CD8-positive, alpha-beta T cell (primary cell): ENCODE measurements at regions of chr7 and their contacts with region 1.

Region 1: DNA sequence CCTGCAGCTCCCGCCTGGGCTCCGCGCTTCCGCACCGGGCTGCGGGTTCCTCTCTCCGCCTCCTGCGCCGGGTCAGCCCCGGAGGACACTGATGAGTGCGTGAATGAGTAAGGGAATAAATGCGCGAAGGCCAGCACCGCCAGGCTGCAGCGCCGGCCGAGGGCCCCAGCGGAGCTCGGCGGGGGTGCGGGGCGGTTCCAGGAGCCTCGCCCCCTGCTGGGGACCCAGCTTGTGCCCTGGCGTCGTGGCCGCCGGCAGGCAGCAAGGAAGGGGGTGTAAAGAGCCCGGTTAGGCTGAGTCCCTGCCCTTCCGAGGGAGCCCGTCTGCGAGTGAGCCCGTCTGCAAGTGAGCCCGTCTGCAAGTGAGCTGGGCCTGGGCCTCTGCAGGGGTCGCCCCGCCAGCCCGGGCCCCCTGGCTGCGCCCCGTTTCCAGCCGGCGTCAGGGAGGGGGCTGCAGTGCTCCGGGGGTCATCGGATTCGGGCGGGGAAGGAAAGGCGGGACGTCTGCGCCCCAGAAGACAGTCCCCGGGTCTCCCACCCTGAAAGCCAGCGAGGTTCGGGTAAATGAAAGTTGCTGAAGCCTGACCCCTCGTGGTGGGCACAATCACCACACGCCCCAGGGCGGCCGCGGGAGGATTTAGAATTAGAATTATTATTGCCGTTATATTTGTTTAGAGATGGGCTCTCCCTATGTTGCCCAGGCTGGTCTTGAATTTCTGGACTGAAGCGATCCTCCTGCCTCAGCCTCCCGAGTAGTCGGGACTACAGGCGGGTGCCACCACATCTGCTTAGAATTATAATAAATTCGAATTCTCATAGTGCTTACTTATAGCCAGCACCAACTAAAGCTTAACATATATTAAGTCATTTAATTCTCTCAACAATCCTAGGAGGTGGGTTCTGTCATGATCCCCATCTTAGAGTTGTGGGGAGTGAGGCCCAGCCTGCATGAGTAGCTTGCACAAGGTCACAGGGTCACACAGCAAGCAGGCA is 8.6 kb upstream of the CRYGN start:
- DNase-seq: peak; percentile 63 to 90 (median 81)
- ATAC-seq: peak; percentile 90
- H3K4me3 ChIP-seq: peak overlapping the region; percentile 53 to 74
- H3K4me3 Mint-ChIP-seq: peak overlapping the region; percentile 86
- H3K27ac ChIP-seq: peak overlapping the region; percentile 16 to 40
- H3K27ac Mint-ChIP-seq: peak overlapping the region; percentile 85
- H3K4me1 ChIP-seq: peaks cover 3% of the 10 kb centered on the region
- H3K4me1 Mint-ChIP-seq: peaks cover 8% of the 10 kb centered on the region
- H3K27me3 ChIP-seq: no peaks in the 10 kb centered on the region
- H3K27me3 Mint-ChIP-seq: peaks cover 7% of the 10 kb centered on the region
- CTCF ChIP-seq: peak; percentile 65

Region 2: GRCh38 chr7:151304856-151305255 is 143.7 kb before region 1 on chr7:
- CTCF ChIA-PET with region 1: interaction called, 17 read pairs
- POLR2A ChIA-PET with region 1: no interaction called
- intact Hi-C with region 1: loop called in 1 of 2 experiments (anchors 1 kb)
- DNase-seq: no peak
- ATAC-seq: no peak
- H3K4me3 ChIP-seq: no peak overlapping the region
- H3K4me3 Mint-ChIP-seq: no peak overlapping the region
- H3K27ac ChIP-seq: no peak overlapping the region
- H3K27ac Mint-ChIP-seq: no peak overlapping the region
- H3K4me1 ChIP-seq: peaks cover 8% of the 10 kb centered on the region
- H3K4me1 Mint-ChIP-seq: peaks cover 6% of the 10 kb centered on the region
- H3K27me3 ChIP-seq: peaks cover 0 to 14% of the 10 kb centered on the region in 2 experiments
- H3K27me3 Mint-ChIP-seq: peaks cover 38% of the 10 kb centered on the region
- CTCF ChIP-seq: no peak

Region 3: GRCh38 chr7:151351027-151351426 is 97.5 kb before region 1 on chr7:
- CTCF ChIA-PET with region 1: interaction called, 89 read pairs
- POLR2A ChIA-PET with region 1: interaction called, 18 read pairs
- intact Hi-C with region 1: loop called (anchors 1 kb)
- DNase-seq: peak in 4 of 9 experiments; percentile 29 to 59 (median 46)
- ATAC-seq: no peak
- H3K4me3 ChIP-seq: no peak overlapping the region
- H3K4me3 Mint-ChIP-seq: peak overlapping the region; percentile 22
- H3K27ac ChIP-seq: peak overlapping the region; percentile 45 to 98
- H3K27ac Mint-ChIP-seq: peak overlapping the region; percentile 89
- H3K4me1 ChIP-seq: peaks cover 39% of the 10 kb centered on the region
- H3K4me1 Mint-ChIP-seq: peaks cover 57% of the 10 kb centered on the region
- H3K27me3 ChIP-seq: no peaks in the 10 kb centered on the region
- H3K27me3 Mint-ChIP-seq: no peaks in the 10 kb centered on the region
- CTCF ChIP-seq: no peak

Region 4: DNA sequence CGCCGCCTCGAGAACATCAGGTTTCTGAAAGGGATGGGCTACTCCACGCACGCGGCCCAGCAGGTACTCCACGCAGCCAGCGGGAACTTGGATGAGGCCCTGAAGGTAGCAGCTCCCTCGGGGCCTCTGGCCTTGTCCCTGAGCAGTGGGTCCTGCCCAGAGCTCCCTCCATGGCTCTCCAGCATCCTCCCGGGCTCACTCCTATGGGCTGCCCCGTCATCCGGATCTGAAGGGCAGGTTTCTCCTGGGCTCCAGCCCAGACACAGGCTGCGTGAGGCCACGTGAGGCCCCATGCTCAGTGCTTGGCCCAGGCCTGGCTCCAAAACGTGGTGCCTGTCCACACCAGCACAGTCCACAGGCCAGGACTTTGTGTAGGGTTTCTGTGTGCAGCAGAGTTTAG is 74.4 kb before region 1 on chr7:
- CTCF ChIA-PET with region 1: interaction called, 248 read pairs
- POLR2A ChIA-PET with region 1: interaction called, 3 read pairs
- intact Hi-C with region 1: no loop called
- DNase-seq: no peak
- ATAC-seq: no peak
- H3K4me3 ChIP-seq: no peak overlapping the region
- H3K4me3 Mint-ChIP-seq: no peak overlapping the region
- H3K27ac ChIP-seq: no peak overlapping the region
- H3K27ac Mint-ChIP-seq: no peak overlapping the region
- H3K4me1 ChIP-seq: no peaks in the 10 kb centered on the region
- H3K4me1 Mint-ChIP-seq: peaks cover 2% of the 10 kb centered on the region
- H3K27me3 ChIP-seq: no peaks in the 10 kb centered on the region
- H3K27me3 Mint-ChIP-seq: no peaks in the 10 kb centered on the region
- CTCF ChIP-seq: no peak

Region 5: DNA sequence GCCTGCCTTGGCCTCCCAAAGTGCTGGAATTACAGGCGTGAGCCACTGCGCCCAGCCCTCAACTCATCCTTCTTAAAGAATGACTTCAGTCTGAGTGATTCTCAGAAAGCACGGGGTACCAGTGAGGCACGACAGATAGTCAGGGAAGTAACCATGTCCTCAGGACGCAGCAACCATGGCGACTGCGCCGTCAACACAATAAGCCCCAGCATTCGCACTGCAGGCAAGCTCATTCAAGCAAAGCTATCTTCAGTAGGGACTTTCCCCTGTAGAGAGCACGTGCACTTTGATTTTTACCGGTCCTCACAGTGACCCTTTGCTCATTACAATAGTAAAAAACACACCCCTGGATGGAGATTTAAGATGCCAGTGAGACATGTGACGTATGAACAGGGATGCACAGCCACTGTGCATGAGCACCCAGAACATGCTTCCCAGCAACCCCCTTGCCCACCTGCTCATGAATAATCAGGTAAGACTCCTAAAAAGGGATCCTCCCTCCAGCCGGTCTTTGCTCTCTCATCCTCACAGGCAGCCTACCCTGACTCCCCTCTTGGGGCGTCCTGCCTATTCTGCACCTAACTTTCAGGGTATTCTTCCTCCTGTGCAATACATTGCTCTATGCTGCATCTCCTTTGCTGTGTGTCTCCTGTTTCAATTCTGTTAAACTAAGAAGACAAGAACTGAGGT is 47.8 kb before region 1 on chr7:
- CTCF ChIA-PET with region 1: interaction called, 13 read pairs
- POLR2A ChIA-PET with region 1: no interaction called
- intact Hi-C with region 1: no loop called
- DNase-seq: peak in 1 of 9 experiments; percentile 34
- ATAC-seq: no peak
- H3K4me3 ChIP-seq: no peak overlapping the region
- H3K4me3 Mint-ChIP-seq: no peak overlapping the region
- H3K27ac ChIP-seq: no peak overlapping the region
- H3K27ac Mint-ChIP-seq: no peak overlapping the region
- H3K4me1 ChIP-seq: no peaks in the 10 kb centered on the region
- H3K4me1 Mint-ChIP-seq: peaks cover 12% of the 10 kb centered on the region
- H3K27me3 ChIP-seq: no peaks in the 10 kb centered on the region
- H3K27me3 Mint-ChIP-seq: no peaks in the 10 kb centered on the region
- CTCF ChIP-seq: no peak

Region 6: GRCh38 chr7:151432791-151433521 is 15.6 kb before region 1 on chr7:
- CTCF ChIA-PET with region 1: interaction called, 57 read pairs
- POLR2A ChIA-PET with region 1: interaction called, 14 read pairs
- intact Hi-C with region 1: loop called (anchors 1 to 2 kb)
- DNase-seq: peak; percentile 23 to 81 (median 57)
- ATAC-seq: peak; percentile 58
- H3K4me3 ChIP-seq: peak overlapping the region in 1 of 2 experiments; percentile 7
- H3K4me3 Mint-ChIP-seq: peak overlapping the region; percentile 45
- H3K27ac ChIP-seq: peak overlapping the region in 1 of 2 experiments; percentile 37
- H3K27ac Mint-ChIP-seq: peak overlapping the region; percentile 62
- H3K4me1 ChIP-seq: peaks cover 54% of the 10 kb centered on the region
- H3K4me1 Mint-ChIP-seq: peaks cover 46% of the 10 kb centered on the region
- H3K27me3 ChIP-seq: no peaks in the 10 kb centered on the region
- H3K27me3 Mint-ChIP-seq: no peaks in the 10 kb centered on the region
- CTCF ChIP-seq: peak; percentile 44